ENCODE measurements at regions of chr2 and their contacts with region 1.

Region 1: DNA sequence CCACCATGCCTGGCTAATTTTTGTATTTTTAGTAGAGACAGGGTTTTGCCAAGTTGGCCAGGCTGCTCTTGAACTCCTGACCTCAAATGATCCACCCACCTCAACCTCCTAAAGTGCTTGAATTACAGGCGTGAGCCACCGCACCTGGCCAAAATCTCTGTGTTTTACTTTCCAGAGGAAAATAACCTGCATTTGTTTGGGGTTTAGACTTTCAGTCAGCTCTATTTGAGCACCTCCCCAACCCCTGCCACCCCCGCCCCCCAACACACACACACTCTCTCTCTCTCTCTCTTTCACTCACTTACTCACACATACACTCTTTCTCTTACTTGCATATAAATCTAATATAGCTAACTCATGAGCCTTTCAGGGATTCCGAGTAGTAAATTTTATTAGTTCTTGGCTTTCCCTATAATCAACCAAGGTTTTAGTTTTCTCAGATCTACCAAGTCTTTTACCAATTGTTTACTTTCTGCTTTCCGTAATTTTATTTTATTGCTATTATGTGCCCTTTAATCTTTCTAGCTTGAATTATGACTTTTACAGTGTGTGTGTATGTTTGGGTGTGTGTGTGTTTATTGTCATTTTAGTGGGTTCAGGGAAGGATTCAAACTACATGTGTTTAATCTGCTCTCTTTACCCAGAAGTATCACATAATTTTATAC is 24.5 kb downstream of the MFSD6 start:
- DNase-seq: no peak
- H3K4me3 ChIP-seq: no peak overlapping the region
- H3K27ac ChIP-seq: no peak overlapping the region
- H3K4me1 ChIP-seq: no peaks in the 10 kb centered on the region
- H3K27me3 ChIP-seq: no peaks in the 10 kb centered on the region
- CTCF ChIP-seq: no peak
- EP300 ChIP-seq: no peak
- POLR2A ChIP-seq: no peak
- RAD21 ChIP-seq: no peak

Region 2: DNA sequence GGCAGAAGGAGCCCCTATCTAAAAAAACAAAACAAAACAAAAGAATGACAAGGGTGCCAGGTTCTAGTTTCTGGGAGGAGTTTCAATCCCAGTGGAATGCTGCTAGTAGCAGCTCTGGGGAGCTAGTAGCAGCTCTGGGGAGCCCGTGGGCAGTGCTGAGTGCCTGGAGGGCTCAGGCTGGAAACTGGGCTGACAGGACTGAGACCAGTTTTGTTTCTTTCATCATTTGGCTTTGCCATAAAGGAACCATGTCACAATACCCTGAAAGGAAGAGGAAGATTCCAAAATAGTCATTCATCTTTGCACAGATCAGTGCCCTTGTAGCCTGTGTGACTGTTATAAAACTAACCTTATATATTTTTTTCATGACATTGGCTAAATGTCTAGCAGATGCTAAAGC is 14.0 kb before region 1 on chr2:
- CTCF ChIA-PET with region 1: interaction called, 17 read pairs
- POLR2A ChIA-PET with region 1: no interaction called
- DNase-seq: no peak
- H3K4me3 ChIP-seq: no peak overlapping the region
- H3K27ac ChIP-seq: no peak overlapping the region
- H3K4me1 ChIP-seq: peaks cover 0 to 2% (median under 1%) of the 10 kb centered on the region in 4 experiments; a peak in 6 of 7 replicates
- H3K27me3 ChIP-seq: no peaks in the 10 kb centered on the region
- CTCF ChIP-seq: no peak
- EP300 ChIP-seq: no peak
- POLR2A ChIP-seq: no peak
- RAD21 ChIP-seq: no peak

Region 3: DNA sequence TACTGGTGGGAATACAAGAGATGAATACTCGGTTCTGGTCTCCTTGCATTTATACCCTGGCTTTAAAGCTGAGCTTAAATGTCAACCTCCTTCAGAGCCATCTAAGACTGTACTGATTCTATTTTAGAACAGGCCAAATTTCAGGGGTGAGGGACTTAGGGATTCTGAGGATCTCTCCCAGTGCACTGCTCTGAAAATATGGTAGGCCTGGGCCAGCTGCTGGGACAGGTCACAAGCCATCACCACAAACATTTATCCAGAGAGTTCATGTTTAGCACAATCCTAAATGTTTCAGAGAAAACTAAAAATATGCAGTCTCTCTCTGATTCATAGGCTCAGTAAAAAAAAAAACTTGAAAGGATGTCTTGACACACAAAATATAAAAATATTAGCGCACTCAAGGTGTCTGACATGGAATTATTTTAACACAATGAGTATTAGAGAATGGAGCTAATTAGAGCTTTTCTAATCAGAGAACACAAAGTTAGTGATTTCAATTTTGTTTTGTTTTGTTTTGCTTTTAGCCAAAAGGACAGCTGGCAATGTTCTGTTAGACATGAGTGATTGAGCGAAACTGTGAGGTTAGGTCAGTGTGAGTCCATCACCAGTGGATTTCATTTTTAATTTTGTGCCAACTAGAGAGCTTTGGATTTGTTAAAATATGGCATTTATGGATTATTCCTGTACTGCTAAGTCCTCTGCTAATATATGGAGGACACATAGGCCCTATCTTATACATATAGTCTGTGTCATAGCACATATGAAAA is 14.2 kb after region 1 on chr2:
- CTCF ChIA-PET with region 1: interaction called, 15 read pairs
- POLR2A ChIA-PET with region 1: interaction called, 3 read pairs
- DNase-seq: no peak
- H3K4me3 ChIP-seq: no peak overlapping the region
- H3K27ac ChIP-seq: no peak overlapping the region
- H3K4me1 ChIP-seq: no peaks in the 10 kb centered on the region
- H3K27me3 ChIP-seq: no peaks in the 10 kb centered on the region
- CTCF ChIP-seq: no peak
- EP300 ChIP-seq: no peak
- POLR2A ChIP-seq: no peak
- RAD21 ChIP-seq: no peak